ENCODE measurements at regions of chr16 and their contacts with region 1.

Region 1: GRCh38 chr16:589658-590159 is at the start of gene RAB40C:
- DNase-seq: peak; percentile 99
- H3K4me3 ChIP-seq: peak within 1 kb of the TSS; percentile 80 to 97 (median 92)
- H3K27ac ChIP-seq: peak within 1 kb of the TSS; percentile 96 to 98 (median 97)
- H3K4me1 ChIP-seq: peaks cover 27 to 57% (median 50%) of the 10 kb centered on the region in 4 donors
- H3K27me3 ChIP-seq: no peaks in the 10 kb centered on the region
- CTCF ChIP-seq: peak in 3 of 5 experiments; percentile 11 to 22 (median 22)
- EP300 ChIP-seq: no peak
- POLR2A ChIP-seq: no peak
- total RNA-seq, gene RAB40C: 54.8 to 111 (median 83.5) TPM

Region 2: DNA sequence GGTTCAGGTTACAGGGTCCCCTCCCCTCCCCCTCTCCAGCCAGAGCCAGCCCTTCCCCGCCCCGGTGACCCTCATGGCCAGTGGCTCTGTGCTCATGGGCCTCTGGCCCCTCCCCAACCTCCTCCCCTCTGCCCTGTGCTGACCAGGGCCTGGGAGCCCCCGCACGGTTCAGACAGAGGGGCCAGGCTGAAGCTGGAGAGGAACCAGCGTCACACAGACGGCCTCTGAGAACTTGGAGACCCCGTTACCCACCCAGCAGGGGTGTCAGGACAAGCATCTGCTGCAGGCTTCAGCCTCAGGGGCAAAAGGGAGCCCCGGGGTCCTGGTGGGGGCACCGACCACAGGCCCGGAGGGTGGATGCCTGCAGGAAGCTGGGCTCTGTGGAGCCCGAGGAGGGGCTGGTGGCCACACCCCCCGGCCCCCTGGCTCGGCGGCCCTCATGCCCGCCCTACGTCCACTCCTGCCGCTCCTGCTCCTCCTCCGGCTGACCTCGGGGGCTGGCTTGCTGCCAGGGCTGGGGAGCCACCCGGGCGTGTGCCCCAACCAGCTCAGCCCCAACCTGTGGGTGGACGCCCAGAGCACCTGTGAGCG is 41.2 kb after region 1 on chr16 and contains the start of gene WFIKKN1:
- in situ Hi-C with region 1: no loop called
- intact Hi-C with region 1: loop called (anchors 1 kb)
- DNase-seq: no peak
- H3K4me3 ChIP-seq: no peak within 1 kb of the TSS
- H3K27ac ChIP-seq: no peak within 1 kb of the TSS
- H3K4me1 ChIP-seq: peaks cover 8 to 24% (median 23%) of the 10 kb centered on the region in 4 donors
- H3K27me3 ChIP-seq: no peaks in the 10 kb centered on the region
- CTCF ChIP-seq: no peak
- EP300 ChIP-seq: no peak
- POLR2A ChIP-seq: no peak
- total RNA-seq, gene WFIKKN1: 2.3 to 13.1 (median 4.2) TPM

Region 3: DNA sequence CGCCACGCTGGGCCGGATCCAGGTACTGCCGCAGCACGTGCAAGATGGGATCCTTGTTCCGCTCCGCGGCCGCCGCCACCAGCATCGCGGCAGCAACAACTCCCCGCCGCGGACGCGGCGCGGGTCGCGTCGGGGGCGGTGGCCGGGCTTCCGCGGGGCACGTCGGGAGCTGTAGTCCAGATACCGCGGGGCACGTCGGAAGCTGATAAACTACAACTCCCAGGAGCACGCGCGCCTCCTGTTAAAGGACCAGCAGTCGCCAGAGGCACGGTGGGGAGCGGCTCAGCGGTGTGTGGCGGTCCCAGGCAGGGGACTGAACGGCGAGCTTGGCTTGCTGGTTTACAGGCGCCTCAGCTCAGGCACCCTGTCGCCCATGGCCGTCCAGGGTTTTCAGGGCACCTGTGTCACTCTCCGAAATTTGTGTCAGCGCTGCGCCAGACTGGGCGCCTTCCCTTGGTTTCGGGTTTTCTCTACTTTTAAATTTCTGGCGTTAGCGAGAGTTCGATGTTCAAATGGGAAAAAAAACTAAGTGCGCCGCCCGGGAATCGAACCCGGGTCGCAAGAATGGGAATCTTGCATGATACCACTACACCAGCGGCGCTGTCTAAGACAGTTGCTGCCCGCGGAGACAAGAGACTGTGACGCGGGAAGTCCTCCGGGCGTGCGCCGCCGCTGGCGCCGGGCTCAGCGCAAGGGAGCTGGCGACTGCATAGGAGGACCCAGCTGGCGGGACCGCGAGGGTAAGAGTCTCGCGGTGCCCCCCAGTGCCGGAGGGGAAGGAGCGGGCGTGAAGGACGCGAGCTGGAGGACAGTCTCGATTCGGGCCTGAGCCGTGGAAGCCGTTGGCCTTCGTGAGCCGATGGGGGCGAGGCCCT is 46.7 kb after region 1 on chr16 and contains the start of gene METTL26:
- in situ Hi-C with region 1: no loop called
- intact Hi-C with region 1: loop called (anchors 1 kb)
- DNase-seq: peak; percentile 97
- H3K4me3 ChIP-seq: peak within 1 kb of the TSS; percentile 73 to 94 (median 79)
- H3K27ac ChIP-seq: peak within 1 kb of the TSS; percentile 96 to 100 (median 98)
- H3K4me1 ChIP-seq: peaks cover 11 to 22% (median 21%) of the 10 kb centered on the region in 4 donors
- H3K27me3 ChIP-seq: no peaks in the 10 kb centered on the region
- CTCF ChIP-seq: peak in 3 of 5 experiments; percentile 3 to 44 (median 20)
- EP300 ChIP-seq: no peak
- POLR2A ChIP-seq: peak; percentile 61
- total RNA-seq, gene METTL26: 32.6 to 91.8 (median 86.7) TPM

Region 4: GRCh38 chr16:648071-648780 is 58.5 kb after region 1 on chr16:
- in situ Hi-C with region 1: no loop called
- intact Hi-C with region 1: no loop called
- DNase-seq: peak; percentile 90
- H3K4me3 ChIP-seq: peak overlapping the region; percentile 52 to 86 (median 71)
- H3K27ac ChIP-seq: peak overlapping the region; percentile 93 to 96 (median 95)
- H3K4me1 ChIP-seq: peaks cover 40 to 68% (median 67%) of the 10 kb centered on the region in 4 donors
- H3K27me3 ChIP-seq: no peaks in the 10 kb centered on the region
- CTCF ChIP-seq: peak; percentile 22 to 80 (median 48)
- EP300 ChIP-seq: peak; percentile 10
- POLR2A ChIP-seq: peak; percentile 31